ENCODE measurements at regions of chr13 and their contacts with region 1.

Region 1: GRCh38 chr13:78241278-78241919 is 322.8 kb upstream of the EDNRB start:
- DNase-seq: peak; percentile 49
- H3K4me3 ChIP-seq: no peak overlapping the region
- H3K27ac ChIP-seq: no peak overlapping the region
- H3K4me1 ChIP-seq: no peaks in the 10 kb centered on the region
- H3K27me3 ChIP-seq: no peaks in the 10 kb centered on the region
- CTCF ChIP-seq: peak; percentile 77
- EP300 ChIP-seq: no peak
- RAD21 ChIP-seq: peak; percentile 93

Region 2: DNA sequence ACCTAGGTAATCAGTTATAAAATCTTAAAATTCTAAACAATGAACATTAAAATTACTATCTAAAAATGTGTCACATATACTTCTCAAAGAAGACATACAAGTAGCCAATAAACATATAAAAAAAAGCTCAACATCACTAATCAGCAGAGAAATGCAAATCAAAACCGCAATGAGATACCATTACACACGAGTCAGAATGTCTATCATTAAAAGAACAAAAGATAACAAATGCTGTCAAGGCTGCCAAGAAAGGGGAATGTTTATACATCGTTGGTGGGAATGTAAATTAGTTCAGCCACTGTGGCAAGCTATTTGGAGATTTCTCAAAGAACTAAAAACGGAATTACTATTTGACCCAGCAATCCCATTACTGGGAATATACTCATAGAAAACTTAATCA is 12.5 kb before region 1 on chr13:
- CTCF ChIA-PET with region 1: interaction called, 10 read pairs
- POLR2A ChIA-PET with region 1: no interaction called
- DNase-seq: no peak
- H3K4me3 ChIP-seq: no peak overlapping the region
- H3K27ac ChIP-seq: no peak overlapping the region
- H3K4me1 ChIP-seq: no peaks in the 10 kb centered on the region
- H3K27me3 ChIP-seq: no peaks in the 10 kb centered on the region
- CTCF ChIP-seq: no peak
- EP300 ChIP-seq: no peak
- RAD21 ChIP-seq: no peak

Region 3: GRCh38 chr13:78254113-78254512 is 12.7 kb after region 1 on chr13:
- CTCF ChIA-PET with region 1: interaction called, 19 read pairs
- POLR2A ChIA-PET with region 1: no interaction called
- DNase-seq: no peak
- H3K4me3 ChIP-seq: no peak overlapping the region
- H3K27ac ChIP-seq: peak overlapping the region in 1 of 2 experiments; percentile 60; a peak in 1 of 4 replicates
- H3K4me1 ChIP-seq: peaks cover 0 to 2% of the 10 kb centered on the region in 2 experiments; a peak in 2 of 4 replicates
- H3K27me3 ChIP-seq: no peaks in the 10 kb centered on the region
- CTCF ChIP-seq: no peak
- EP300 ChIP-seq: no peak
- RAD21 ChIP-seq: no peak

Region 4: DNA sequence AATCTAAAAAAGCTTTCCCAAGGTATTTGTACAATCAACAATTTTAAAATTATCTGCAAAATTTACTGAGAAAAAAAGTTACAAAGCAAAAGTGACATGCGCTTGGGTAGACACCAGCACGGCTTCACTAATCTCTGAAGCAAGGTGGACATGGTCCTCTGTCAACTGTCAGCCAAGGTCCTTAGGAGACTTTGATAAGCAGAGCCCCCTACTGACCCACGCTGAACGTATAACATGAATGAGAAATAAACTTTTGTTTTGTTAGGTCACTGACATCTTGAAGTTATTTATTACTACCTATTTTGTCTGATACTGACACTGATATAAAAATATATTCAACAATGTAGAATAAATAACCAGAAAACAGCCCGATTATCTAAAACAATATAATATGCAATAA is 518.3 kb after region 1 on chr13:
- CTCF ChIA-PET with region 1: interaction called, 10 read pairs
- POLR2A ChIA-PET with region 1: no interaction called
- DNase-seq: peak; percentile 8
- H3K4me3 ChIP-seq: no peak overlapping the region
- H3K27ac ChIP-seq: no peak overlapping the region
- H3K4me1 ChIP-seq: no peaks in the 10 kb centered on the region
- H3K27me3 ChIP-seq: no peaks in the 10 kb centered on the region
- CTCF ChIP-seq: no peak
- EP300 ChIP-seq: no peak
- RAD21 ChIP-seq: peak; percentile 39; the same call in 1 of the 2 replicates